Activated CD4-positive, alpha-beta T cell treated with anti-CD3 and anti-CD28 coated beads for 36 hours (primary cell): ENCODE measurements at regions of chr6 and their contacts with region 1.

Region 1: DNA sequence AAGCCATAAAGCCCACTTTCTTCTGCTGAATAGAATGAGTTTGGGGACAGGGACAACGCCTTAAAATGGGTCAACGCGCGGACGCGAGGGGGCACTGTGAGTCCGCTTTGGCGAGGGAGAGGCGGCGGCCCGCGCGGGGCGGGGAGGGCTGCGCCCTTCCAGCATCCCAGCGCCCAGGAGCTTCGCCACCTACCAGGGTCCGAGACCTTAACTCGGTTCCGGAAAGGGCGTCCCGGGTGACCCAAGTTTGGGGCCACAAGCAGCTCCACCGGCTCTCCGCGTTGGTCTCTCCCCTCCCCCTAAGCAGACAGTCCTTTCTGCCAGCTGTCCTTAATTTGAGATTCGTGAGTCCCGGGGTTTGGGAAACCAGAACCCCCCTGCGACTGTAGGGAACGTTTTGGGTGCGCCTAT is 1.8 kb upstream of the SAMD5 start:
- DNase-seq: peak; percentile 82
- ATAC-seq: peak; percentile 64
- H3K4me3 Mint-ChIP-seq: no peak overlapping the region
- H3K27ac Mint-ChIP-seq: no peak overlapping the region
- H3K4me1 Mint-ChIP-seq: peaks cover 12% of the 10 kb centered on the region
- H3K27me3 Mint-ChIP-seq: peaks cover 54% of the 10 kb centered on the region

Region 2: GRCh38 chr6:147378819-147379218 is 127.9 kb before region 1 on chr6:
- CTCF ChIA-PET with region 1: no interaction called
- POLR2A ChIA-PET with region 1: no interaction called
- intact Hi-C with region 1: no loop called
- DNase-seq: no peak
- ATAC-seq: no peak
- H3K4me3 Mint-ChIP-seq: no peak overlapping the region
- H3K27ac Mint-ChIP-seq: no peak overlapping the region
- H3K4me1 Mint-ChIP-seq: peaks cover 1% of the 10 kb centered on the region
- H3K27me3 Mint-ChIP-seq: no peaks in the 10 kb centered on the region

Region 3: DNA sequence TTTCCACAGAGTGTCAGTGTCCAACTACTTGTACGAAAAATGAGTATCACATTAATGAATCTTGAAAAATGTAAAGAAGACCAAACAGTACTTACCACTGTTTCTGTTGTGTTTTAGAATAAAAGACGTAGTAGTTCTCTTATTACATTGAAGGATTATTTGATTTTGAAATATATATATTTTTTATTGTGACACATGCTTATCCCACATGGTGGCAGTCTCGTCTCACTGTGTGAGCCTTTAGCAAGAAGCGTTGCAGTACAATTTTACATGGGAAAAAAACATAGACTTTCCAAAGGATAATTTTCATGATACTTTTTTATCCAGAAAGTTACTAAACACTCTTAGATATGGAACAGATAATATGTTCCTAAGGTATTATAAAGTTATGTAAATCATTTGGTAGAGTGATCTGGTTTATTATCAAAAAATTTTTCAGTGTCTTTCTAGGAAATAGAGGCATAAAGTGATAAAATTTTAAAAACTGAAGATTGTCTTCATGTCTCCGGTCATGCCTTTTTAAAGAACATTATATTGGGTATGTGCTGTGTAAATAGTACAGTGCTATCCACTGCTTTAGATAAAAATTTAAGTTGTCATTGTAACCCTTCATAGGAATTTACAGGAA is 115.7 kb before region 1 on chr6:
- CTCF ChIA-PET with region 1: no interaction called
- POLR2A ChIA-PET with region 1: no interaction called
- intact Hi-C with region 1: loop called in 1 of 2 experiments (anchors 5 kb)
- DNase-seq: no peak
- ATAC-seq: no peak
- H3K4me3 Mint-ChIP-seq: no peak overlapping the region
- H3K27ac Mint-ChIP-seq: no peak overlapping the region
- H3K4me1 Mint-ChIP-seq: no peaks in the 10 kb centered on the region
- H3K27me3 Mint-ChIP-seq: no peaks in the 10 kb centered on the region

Region 4: GRCh38 chr6:147588469-147588868 is 81.8 kb after region 1 on chr6:
- CTCF ChIA-PET with region 1: no interaction called
- POLR2A ChIA-PET with region 1: no interaction called
- intact Hi-C with region 1: no loop called
- DNase-seq: no peak
- ATAC-seq: no peak
- H3K4me3 Mint-ChIP-seq: no peak overlapping the region
- H3K27ac Mint-ChIP-seq: no peak overlapping the region
- H3K4me1 Mint-ChIP-seq: no peaks in the 10 kb centered on the region
- H3K27me3 Mint-ChIP-seq: no peaks in the 10 kb centered on the region

Region 5: GRCh38 chr6:148144917-148145521 is 638.3 kb after region 1 on chr6:
- CTCF ChIA-PET with region 1: no interaction called
- POLR2A ChIA-PET with region 1: no interaction called
- intact Hi-C with region 1: loop called in 1 of 2 experiments (anchors 5 kb)
- DNase-seq: peak; percentile 85
- ATAC-seq: no peak
- H3K4me3 Mint-ChIP-seq: no peak overlapping the region
- H3K27ac Mint-ChIP-seq: no peak overlapping the region
- H3K4me1 Mint-ChIP-seq: peaks cover 19% of the 10 kb centered on the region
- H3K27me3 Mint-ChIP-seq: peaks cover 9% of the 10 kb centered on the region

Region 6: GRCh38 chr6:148177589-148178233 is 671.0 kb after region 1 on chr6:
- CTCF ChIA-PET with region 1: interaction called, 11 read pairs
- POLR2A ChIA-PET with region 1: no interaction called
- intact Hi-C with region 1: no loop called
- DNase-seq: peak; percentile 63
- ATAC-seq: no peak
- H3K4me3 Mint-ChIP-seq: no peak overlapping the region
- H3K27ac Mint-ChIP-seq: no peak overlapping the region
- H3K4me1 Mint-ChIP-seq: no peaks in the 10 kb centered on the region
- H3K27me3 Mint-ChIP-seq: peaks cover 24% of the 10 kb centered on the region

Region 7: DNA sequence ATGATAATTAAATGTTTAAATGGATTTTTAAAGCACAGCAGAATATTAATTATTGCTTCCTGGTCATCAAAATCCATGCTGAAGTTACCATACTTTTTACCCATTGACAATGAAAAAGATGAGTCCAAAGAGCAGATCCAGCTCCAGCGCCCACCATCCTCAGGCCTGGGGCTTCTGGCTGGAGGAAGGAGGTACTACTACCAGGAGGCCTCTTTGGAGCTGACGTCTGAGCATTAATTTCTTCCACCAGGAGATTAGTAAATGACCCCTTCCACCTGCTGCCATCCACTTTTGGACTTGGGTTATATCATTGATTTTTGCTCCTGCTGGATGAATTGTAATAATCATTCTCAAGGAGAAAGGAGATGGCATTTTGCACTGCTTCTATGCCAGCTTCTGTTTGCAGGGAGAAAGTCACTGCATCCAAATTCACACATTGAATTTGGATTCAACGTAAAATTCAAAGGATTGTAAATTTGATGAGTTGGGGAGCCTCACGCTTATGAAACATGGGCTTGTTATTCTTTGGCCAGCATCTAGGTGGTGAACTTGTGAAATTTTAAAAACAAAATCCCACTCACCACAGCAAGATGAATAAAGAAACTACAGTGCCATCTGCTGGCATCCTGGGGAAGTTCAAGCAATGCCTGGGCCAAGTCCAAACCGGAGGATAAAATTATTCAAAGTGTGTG is 957.8 kb after region 1 on chr6:
- CTCF ChIA-PET with region 1: interaction called, 4 read pairs
- POLR2A ChIA-PET with region 1: no interaction called
- intact Hi-C with region 1: loop called (anchors 1 to 5 kb)
- DNase-seq: peak; percentile 75
- ATAC-seq: peak; percentile 60
- H3K4me3 Mint-ChIP-seq: no peak overlapping the region
- H3K27ac Mint-ChIP-seq: no peak overlapping the region
- H3K4me1 Mint-ChIP-seq: peaks cover 3% of the 10 kb centered on the region
- H3K27me3 Mint-ChIP-seq: peaks cover 12% of the 10 kb centered on the region